ENCODE measurements at regions of chr3 and their contacts with region 1.

Region 1: GRCh38 chr3:99833617-99834205 is 16.0 kb downstream of the CMSS1 start:
- DNase-seq: no peak
- ATAC-seq: no peak
- H3K4me3 Mint-ChIP-seq: no peak overlapping the region
- H3K27ac Mint-ChIP-seq: no peak overlapping the region
- H3K4me1 Mint-ChIP-seq: peaks cover 8% of the 10 kb centered on the region
- H3K27me3 Mint-ChIP-seq: no peaks in the 10 kb centered on the region
- CTCF ChIP-seq: no peak

Region 2: GRCh38 chr3:99640214-99640851 is 193.4 kb before region 1 on chr3:
- CTCF ChIA-PET with region 1: no interaction called
- POLR2A ChIA-PET with region 1: no interaction called
- DNase-seq: no peak
- ATAC-seq: no peak
- H3K4me3 Mint-ChIP-seq: no peak overlapping the region
- H3K27ac Mint-ChIP-seq: no peak overlapping the region
- H3K4me1 Mint-ChIP-seq: peaks cover 37% of the 10 kb centered on the region
- H3K27me3 Mint-ChIP-seq: peaks cover 47% of the 10 kb centered on the region
- CTCF ChIP-seq: no peak

Region 3: DNA sequence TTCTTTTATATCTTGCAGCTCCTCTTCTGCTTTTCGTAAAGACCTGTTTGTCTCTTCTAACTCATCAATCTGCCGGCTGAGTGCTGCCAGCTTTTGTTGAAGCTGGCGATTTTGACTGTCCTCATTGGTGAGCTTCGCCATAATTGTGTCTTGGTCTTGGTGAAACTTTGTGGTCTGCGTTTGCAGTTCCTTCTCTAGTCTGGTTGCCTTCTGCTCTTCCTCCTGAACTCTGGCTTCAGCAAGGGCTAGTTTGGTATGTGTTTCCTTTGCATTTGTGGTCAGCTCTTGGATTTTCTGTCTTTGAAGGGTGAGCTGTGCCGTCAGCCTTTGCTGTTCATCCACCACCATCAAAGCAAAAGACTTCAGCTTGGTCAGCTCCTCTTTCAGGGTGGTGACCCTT is 16.9 kb after region 1 on chr3:
- CTCF ChIA-PET with region 1: interaction called, 14 read pairs
- POLR2A ChIA-PET with region 1: no interaction called
- DNase-seq: no peak
- ATAC-seq: no peak
- H3K4me3 Mint-ChIP-seq: no peak overlapping the region
- H3K27ac Mint-ChIP-seq: no peak overlapping the region
- H3K4me1 Mint-ChIP-seq: peaks cover 36% of the 10 kb centered on the region
- H3K27me3 Mint-ChIP-seq: no peaks in the 10 kb centered on the region
- CTCF ChIP-seq: no peak

Region 4: DNA sequence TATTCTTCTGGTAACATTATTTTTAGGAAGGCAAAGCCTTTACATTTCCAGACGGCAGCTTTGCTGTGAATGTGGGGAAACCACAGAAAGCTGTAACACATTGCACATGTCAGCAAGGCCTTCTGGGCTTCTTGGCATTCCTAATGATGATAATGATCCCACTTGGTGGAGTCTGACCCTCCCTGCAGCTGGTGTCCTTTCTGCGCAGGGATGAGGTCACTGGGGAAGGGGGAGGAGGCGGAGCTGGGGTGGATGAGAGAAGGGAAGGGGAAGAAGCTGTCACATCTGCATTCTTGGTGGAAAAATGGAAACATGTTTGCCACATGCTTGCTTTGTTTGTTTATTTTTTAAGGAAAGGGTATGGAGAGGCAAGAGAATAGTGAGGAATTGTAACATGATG is 212.0 kb after region 1 on chr3:
- CTCF ChIA-PET with region 1: interaction called, 10 read pairs
- POLR2A ChIA-PET with region 1: no interaction called
- DNase-seq: peak; percentile 21
- ATAC-seq: peak; percentile 76
- H3K4me3 Mint-ChIP-seq: no peak overlapping the region
- H3K27ac Mint-ChIP-seq: no peak overlapping the region; the same call in 1 of the 2 replicates
- H3K4me1 Mint-ChIP-seq: peaks cover 26% of the 10 kb centered on the region
- H3K27me3 Mint-ChIP-seq: no peaks in the 10 kb centered on the region
- CTCF ChIP-seq: no peak

Region 5: DNA sequence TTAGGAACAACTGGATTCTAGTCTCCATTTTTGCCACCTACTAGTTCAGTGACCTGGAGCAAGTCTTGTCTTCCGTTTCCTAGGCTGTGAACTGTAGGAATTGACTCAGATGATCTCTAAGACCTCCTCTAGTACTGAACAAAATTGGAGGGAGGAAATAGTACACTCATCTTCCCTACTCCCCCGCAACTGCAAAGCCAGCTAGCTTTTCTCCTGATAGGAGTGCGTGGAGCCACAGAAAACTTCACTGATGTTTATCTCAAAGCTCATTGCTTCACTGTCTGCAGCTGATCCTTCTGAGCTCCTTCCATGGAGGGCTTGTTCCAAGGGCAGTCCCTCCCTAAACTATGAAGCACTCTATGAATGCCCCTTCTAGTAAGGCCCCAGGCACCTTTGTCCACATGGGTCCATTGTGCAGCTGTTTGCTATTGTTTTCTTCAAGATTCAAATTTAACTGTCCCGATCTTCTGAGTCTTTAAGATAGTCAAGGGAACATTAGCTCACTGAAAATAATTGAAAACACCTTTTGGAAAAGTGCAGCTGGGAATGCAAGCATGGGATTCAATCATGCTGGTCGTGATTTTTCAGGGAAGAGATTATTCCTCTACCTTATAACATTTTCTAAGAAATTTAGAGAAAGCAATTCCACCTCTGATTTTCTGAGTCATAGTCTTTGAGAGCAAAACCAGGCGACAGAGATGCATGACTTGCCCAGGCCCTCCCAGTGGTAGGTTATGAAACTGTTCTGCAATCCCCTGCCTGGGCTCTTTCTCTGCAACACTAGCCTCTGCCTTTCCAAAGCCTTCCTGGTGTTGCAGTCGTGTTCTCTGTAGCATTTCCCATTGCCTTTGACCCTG is 256.3 kb after region 1 on chr3:
- CTCF ChIA-PET with region 1: interaction called, 11 read pairs
- POLR2A ChIA-PET with region 1: interaction called, 5 read pairs
- DNase-seq: peak; percentile 43
- ATAC-seq: peak; percentile 95
- H3K4me3 Mint-ChIP-seq: no peak overlapping the region
- H3K27ac Mint-ChIP-seq: peak overlapping the region; percentile 36
- H3K4me1 Mint-ChIP-seq: peaks cover 45% of the 10 kb centered on the region
- H3K27me3 Mint-ChIP-seq: no peaks in the 10 kb centered on the region
- CTCF ChIP-seq: no peak; the same call in 1 of the 2 replicates

Region 6: GRCh38 chr3:100260685-100261484 is 427.2 kb after region 1 on chr3 and contains the start of gene TBC1D23:
- CTCF ChIA-PET with region 1: interaction called, 15 read pairs
- POLR2A ChIA-PET with region 1: no interaction called
- DNase-seq: peak; percentile 98
- ATAC-seq: peak; percentile 99
- H3K4me3 Mint-ChIP-seq: peak within 1 kb of the TSS; percentile 95
- H3K27ac Mint-ChIP-seq: peak within 1 kb of the TSS; percentile 99
- H3K4me1 Mint-ChIP-seq: peaks cover 38% of the 10 kb centered on the region
- H3K27me3 Mint-ChIP-seq: no peaks in the 10 kb centered on the region
- CTCF ChIP-seq: no peak
- total RNA-seq, gene TBC1D23: 45.0 to 73.6 TPM (median 46.3 TPM) in 3 replicates

Region 7: DNA sequence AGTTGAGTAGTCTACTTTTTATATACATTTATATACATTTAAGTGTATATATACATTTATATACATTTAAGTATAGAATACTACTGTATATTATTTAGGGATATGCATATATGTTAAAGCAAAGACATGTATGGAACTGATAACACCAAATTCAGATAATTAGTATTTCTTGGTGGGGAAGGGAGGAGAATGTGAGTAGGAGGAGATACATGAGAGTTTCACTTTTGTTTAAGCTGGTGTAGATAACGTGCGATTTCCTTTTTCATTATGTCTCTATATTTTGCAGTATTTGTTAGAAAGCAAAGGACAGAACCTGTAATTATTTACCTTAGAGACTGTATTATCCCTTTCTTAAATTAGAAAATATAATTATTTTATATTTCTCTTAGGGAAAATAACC is 484.2 kb after region 1 on chr3:
- CTCF ChIA-PET with region 1: no interaction called
- POLR2A ChIA-PET with region 1: no interaction called
- DNase-seq: no peak
- ATAC-seq: no peak
- H3K4me3 Mint-ChIP-seq: no peak overlapping the region
- H3K27ac Mint-ChIP-seq: no peak overlapping the region
- H3K4me1 Mint-ChIP-seq: no peaks in the 10 kb centered on the region
- H3K27me3 Mint-ChIP-seq: no peaks in the 10 kb centered on the region
- CTCF ChIP-seq: no peak